Posterior vena cava (tissue), 2 donors: ENCODE measurements at regions of chr2 and their contacts with region 1.

Region 1: DNA sequence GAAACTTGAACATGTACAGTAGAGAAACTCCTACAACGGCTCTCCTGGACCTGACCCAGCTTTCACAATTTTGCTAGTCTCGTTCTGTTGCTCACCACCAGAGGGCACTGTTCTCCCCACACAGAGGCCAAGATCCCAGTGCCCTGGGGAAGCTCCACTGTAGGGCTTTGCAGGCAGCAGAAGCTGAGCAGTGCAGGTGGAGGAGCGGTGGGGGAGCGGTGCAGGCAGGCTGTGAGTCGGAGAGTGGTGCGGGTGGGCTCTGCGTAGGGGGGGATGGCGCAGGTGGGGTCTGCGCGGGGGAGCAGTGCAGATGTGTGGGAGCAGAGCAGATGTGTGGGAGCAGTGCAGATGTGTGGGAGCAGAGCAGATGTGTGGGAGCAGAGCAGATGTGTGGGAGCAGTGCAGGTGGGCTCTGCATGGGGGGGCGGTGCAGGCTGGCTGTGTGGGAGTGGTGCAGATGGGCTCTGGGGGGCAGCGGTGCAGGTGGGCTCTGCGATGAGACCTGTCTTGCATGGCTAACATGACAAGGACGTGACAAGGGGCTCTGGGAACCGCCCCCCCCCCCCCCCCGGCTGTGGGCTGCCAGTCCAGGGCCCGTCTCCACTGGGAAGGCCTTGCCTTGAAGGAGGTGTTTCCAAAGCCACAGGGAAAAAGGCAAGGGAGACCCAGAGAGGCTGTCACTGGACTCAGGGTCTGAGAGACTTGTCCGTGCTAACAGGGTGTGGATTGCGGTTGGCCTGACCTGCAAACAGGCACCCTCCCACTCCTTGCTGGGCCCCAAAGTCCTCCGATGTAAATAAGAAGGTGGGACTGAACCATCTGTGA is 7.3 kb downstream of the CYS1 start:
- DNase-seq: peak; percentile 92

Region 2: DNA sequence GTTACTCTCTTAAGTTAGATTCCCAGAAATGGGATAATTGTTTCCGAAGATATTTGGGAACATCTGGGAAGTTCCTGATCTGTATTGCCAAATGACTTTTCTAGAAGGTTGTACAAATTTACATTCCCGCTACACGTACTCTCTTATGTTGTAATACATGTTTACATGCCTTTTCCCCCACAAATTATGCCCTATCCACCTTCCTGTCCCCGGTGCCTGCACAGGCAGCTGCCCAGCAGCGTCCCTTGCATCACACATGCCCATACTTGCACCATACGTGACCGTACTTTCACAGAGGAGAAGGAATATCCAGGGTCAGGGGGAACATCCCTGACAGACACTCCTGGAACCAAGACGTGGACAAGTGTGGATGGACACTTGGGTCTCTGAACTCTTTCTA is 53.7 kb before region 1 on chr2:
- intact Hi-C with region 1: no loop called
- DNase-seq: peak; percentile 44

Region 3: GRCh38 chr2:10434886-10435819 is 362.3 kb after region 1 on chr2:
- intact Hi-C with region 1: loop called in 1 of 2 experiments (anchors 10 kb)
- DNase-seq: peak; percentile 93